Head of caudate nucleus (tissue), 42 donors: ENCODE measurements at regions of chr4 and their contacts with region 1.

Region 1: GRCh38 chr4:36351082-36351666 is 69.8 kb downstream of the DTHD1 start:
- DNase-seq: peak; percentile 55 to 94 (median 84)

Region 2: GRCh38 chr4:36399762-36400353 is 48.7 kb after region 1 on chr4:
- intact Hi-C with region 1: loop called (anchors 5 kb)
- DNase-seq: peak in 41 of 42 donors; percentile 2 to 88 (median 59)

Region 3: DNA sequence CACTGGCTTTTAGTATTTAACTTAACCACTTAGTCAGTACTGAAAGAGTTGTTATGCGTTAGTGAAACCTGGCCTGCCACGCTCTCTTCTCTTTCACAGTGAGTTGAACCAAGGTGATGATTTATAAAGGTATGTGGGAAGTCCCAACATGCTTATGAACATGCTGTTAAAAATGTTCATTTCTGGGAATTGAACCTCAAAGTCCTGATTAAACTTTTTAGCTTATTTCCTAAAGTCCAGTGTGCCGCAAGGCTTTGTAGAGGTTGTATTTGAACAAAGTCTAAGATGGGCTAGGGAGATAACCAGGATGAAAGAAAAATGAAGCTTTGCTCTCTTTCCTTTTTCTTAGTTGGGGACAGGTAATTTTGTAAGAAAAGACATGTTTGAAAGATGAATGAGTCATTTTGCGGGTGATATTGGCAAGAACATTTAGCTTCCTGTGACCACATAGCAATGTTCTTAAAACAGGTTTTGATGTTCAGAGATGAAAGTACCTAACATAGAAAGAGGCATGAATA is 200.6 kb after region 1 on chr4:
- intact Hi-C with region 1: no loop called
- DNase-seq: no peak

Region 4: DNA sequence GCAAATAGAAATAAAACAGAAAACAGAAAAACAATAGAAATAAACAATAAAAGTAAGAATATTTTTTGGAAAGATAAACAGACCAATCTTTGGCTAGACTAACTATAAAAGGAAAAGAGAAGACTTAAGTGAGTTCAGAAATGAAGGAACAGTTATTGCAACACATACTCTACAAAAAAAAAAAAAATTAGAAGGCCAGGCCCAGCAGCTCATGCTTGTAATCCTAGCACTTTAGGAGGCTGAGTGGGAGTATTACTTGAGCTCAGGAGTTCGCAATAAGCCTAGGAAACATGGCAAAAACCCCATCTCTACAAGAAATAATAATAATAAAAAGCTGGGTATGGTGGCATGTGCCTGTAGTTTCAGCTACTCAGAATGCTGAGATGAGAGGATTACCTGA is 266.9 kb after region 1 on chr4:
- intact Hi-C with region 1: no loop called
- DNase-seq: no peak